Right ventricle myocardium inferior (tissue), 1 donor: ENCODE measurements at regions of chr11 and their contacts with region 1.

Region 1: DNA sequence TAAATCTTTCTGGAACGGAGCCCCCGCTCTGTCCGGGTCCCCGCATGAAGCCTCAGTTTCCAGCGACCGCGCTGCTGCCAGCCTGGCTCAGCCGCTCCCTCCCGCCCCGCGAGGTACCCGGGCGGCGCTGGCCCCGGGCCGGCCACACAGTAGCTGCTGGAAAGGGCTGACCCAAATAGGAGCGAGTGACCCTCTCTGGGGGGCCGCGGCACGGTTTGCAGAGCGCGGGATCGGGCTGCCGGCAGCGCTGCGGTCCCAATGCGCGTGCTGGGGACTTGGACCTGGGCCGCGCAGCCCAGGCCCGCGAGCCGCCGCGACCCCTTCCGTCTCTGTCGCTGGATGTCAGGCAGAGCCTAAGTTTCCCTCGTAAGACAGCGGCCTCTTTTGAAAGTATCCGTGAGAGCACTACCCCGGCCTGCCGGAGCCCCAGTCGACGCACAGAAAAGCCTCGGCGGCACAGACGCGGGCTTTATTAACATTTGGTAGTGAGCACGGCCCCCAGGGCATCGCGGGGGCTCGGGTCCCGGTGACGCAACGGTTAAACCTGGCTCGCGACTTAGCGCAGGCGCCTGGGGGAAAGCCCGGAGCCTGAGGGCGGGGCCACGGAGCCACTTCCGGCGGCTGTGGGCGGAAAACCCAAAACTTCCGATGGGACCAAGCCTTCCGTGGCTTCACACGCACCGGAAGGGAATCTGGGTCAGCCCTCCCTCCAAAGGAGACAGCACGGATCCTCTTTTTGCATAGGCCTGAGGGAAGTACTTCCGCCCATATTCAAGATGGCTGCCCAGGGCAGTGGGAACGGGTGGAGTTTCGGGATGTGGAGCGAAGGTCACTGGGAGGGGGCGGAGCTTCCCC is 14.9 kb downstream of the BAD start:
- DNase-seq: peak; percentile 98
- ATAC-seq: peak; percentile 90

Region 2: DNA sequence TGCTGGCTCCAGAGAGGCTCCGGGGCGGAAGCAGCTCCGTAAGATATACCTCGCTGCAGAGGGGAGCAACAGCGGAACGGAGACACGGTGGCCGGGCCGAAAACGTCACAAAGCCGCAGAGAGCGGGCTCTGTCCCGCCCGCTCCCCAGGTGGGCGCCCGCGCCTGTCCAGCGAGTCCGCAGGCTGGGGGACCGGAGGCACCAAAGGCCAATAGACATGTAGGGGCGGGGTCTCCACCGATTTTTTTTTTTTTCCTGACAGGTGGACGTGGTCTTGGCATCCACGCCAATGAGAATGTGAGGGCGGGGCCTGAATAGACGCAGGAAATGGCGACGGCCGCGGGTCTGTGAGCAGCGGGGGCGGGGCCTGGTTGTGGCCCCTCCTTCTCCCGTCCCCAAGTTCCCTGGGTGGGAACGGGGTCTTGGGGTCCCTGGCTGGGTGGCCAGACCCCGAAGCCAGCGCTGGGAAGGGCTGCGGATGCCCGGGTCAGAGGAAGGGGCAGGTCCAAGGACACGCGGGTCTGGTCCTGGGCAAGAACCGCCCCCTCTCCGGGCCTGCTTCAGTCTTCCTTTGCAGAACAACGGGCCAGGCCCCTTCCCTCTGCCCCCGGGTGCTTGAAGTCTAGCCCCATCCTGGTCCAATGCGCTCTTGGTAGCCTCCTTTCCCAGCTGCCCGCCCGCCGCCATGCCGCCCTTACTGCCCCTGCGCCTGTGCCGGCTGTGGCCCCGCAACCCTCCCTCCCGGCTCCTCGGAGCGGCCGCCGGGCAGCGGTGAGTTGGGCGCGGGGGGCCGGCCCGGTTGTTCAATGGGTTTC is 39.2 kb before region 1 on chr11 and contains the start of gene DNAJC4:
- intact Hi-C with region 1: no loop called
- DNase-seq: peak; percentile 96
- ATAC-seq: peak; percentile 64
- total RNA-seq, gene DNAJC4: 53.5 TPM

Region 3: GRCh38 chr11:64251016-64251752 is 18.4 kb before region 1 on chr11 and contains the start of gene PLCB3:
- intact Hi-C with region 1: loop called (anchors 2 kb)
- DNase-seq: peak; percentile 86
- ATAC-seq: peak; percentile 63
- total RNA-seq, gene PLCB3: 10.9 TPM

Region 4: GRCh38 chr11:64284048-64284961 is 14.7 kb after region 1 on chr11 and contains the start of gene BAD:
- intact Hi-C with region 1: loop called (anchors 1 kb)
- DNase-seq: peak; percentile 96
- ATAC-seq: peak; percentile 92
- total RNA-seq, gene BAD: 89.1 TPM

Region 5: DNA sequence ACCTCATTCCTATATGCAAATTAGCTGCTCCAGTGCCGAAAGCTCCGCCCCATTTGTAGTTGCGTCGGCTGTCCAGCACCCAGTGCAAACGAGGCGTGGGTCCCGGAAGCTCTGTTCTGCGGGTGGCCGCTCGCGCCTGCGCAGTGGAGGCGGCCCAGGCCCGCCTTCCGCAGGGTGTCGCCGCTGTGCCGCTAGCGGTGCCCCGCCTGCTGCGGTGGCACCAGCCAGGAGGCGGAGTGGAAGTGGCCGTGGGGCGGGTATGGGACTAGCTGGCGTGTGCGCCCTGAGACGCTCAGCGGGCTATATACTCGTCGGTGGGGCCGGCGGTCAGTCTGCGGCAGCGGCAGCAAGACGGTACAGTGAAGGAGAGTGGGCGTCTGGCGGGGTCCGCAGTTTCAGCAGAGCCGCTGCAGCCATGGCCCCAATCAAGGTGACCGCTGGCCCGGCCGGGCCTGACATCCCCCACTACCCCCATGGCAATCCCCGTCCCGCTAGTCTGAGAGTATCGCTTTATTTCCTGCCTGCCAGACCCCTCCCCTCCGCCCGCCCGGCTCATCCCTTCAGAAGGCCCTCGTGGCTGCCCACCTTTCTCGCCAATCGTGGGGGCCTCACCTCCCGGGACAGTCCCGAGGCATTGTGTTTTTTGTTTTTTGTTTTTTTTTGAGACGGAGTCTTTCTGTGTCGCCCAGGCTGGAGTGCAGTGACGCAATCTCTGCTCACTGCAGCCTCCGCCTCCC is 48.5 kb after region 1 on chr11 and contains the start of gene PRDX5:
- intact Hi-C with region 1: loop called (anchors 1 kb)
- DNase-seq: peak; percentile 98
- ATAC-seq: peak; percentile 93
- total RNA-seq, gene PRDX5: 410 TPM